GM12878 (cell line): ENCODE measurements at regions of chr1 and their contacts with region 1.

Region 1: GRCh38 chr1:63691701-63692425 is 82.0 kb upstream of the ROR1 start:
- DNase-seq: no peak
- ATAC-seq: peak; percentile 90
- H3K4me3 ChIP-seq: no peak overlapping the region
- H3K27ac ChIP-seq: no peak overlapping the region
- H3K4me1 ChIP-seq: no peaks in the 10 kb centered on the region
- H3K27me3 ChIP-seq: no peaks in the 10 kb centered on the region; a peak in 1 of 4 replicates
- CTCF ChIP-seq: peak; percentile 76 to 84 (median 83)
- EP300 ChIP-seq: no peak
- POLR2A ChIP-seq: no peak
- RAD21 ChIP-seq: peak; percentile 90

Region 2: DNA sequence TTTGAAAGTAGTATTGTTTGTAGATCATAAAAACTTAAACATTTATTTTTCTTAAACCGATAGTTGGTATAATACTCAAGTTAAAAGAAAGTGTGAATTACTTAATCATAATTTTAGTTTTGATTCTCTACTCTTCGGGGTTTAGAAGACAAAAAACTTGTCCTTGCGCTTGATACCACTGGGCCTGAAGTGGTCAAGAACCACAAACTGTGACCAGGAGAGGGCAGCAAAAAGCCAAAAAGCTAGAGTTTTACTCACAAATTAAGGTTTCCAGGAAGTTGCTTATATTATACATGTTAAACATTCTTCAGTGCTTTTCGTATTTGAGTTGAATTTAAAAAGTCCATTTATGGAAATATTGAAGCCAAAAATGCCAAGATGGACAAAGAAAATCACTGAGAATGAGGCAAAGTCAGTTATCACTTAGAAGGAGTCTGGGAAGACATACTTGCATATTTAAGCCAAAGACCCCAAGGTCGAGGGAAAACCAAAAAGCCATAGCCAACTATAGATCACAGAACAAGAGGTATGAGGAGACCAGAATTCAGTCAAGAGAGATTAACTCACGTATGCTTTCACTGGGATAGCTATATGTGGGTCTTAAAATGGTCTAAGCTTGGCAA is 134.4 kb before region 1 on chr1:
- CTCF ChIA-PET with region 1: interaction called, 14 read pairs
- POLR2A ChIA-PET with region 1: interaction called, 5 read pairs
- RAD21 ChIA-PET with region 1: interaction called, 15 read pairs
- SMC1A ChIA-PET with region 1: interaction called, 5 read pairs
- in situ Hi-C with region 1: no loop called
- intact Hi-C with region 1: no loop called
- DNase-seq: no peak
- ATAC-seq: peak; percentile 88
- H3K4me3 ChIP-seq: no peak overlapping the region
- H3K27ac ChIP-seq: no peak overlapping the region
- H3K4me1 ChIP-seq: no peaks in the 10 kb centered on the region
- H3K27me3 ChIP-seq: no peaks in the 10 kb centered on the region
- CTCF ChIP-seq: peak; percentile 45 to 64 (median 55)
- EP300 ChIP-seq: no peak
- POLR2A ChIP-seq: no peak
- RAD21 ChIP-seq: peak; percentile 63

Region 3: GRCh38 chr1:63615768-63616420 is 76.0 kb before region 1 on chr1:
- CTCF ChIA-PET with region 1: interaction called, 4 read pairs
- POLR2A ChIA-PET with region 1: no interaction called
- RAD21 ChIA-PET with region 1: interaction called, 10 read pairs
- SMC1A ChIA-PET with region 1: interaction called, 9 read pairs
- in situ Hi-C with region 1: no loop called
- intact Hi-C with region 1: no loop called
- DNase-seq: peak; percentile 19
- ATAC-seq: peak; percentile 90
- H3K4me3 ChIP-seq: no peak overlapping the region
- H3K27ac ChIP-seq: no peak overlapping the region
- H3K4me1 ChIP-seq: no peaks in the 10 kb centered on the region
- H3K27me3 ChIP-seq: no peaks in the 10 kb centered on the region
- CTCF ChIP-seq: peak; percentile 57 to 79 (median 71); a peak in 5 of 6 replicates
- EP300 ChIP-seq: no peak
- POLR2A ChIP-seq: no peak
- RAD21 ChIP-seq: peak; percentile 76

Region 4: DNA sequence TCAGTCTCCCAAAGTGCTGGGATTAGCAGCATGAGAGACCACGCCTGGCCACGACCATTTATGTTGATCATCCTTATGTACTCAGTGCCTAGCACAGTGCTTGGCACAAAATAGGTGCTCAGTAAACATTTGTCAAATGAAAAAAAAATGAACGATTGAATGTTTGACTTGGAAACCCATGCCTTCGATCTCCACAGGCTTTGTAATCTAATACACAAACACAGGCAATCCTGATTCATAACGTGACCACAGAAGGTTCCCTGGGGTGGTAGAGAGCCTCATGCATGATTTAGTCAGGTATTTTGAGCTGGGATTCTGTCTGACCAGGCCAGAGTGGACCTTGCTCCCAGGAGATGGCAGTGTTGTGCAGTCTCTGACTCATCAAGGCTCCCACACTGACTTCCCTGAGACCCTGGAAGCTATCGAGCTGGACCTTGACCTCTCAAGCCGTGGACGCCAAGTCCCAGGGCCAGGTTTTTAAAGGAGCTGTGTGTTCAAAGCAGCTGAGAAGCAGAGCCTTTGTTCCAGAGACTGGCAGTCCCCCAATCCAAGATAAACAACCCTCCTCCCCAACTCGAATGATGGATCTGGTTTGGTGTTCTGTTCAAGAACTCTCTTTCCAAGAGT is 17.5 kb before region 1 on chr1:
- CTCF ChIA-PET with region 1: interaction called, 24 read pairs
- POLR2A ChIA-PET with region 1: no interaction called
- RAD21 ChIA-PET with region 1: interaction called, 9 read pairs
- SMC1A ChIA-PET with region 1: interaction called, 8 read pairs
- in situ Hi-C with region 1: no loop called
- intact Hi-C with region 1: no loop called
- DNase-seq: no peak
- ATAC-seq: peak; percentile 94
- H3K4me3 ChIP-seq: no peak overlapping the region
- H3K27ac ChIP-seq: no peak overlapping the region
- H3K4me1 ChIP-seq: no peaks in the 10 kb centered on the region
- H3K27me3 ChIP-seq: no peaks in the 10 kb centered on the region
- CTCF ChIP-seq: peak; percentile 42 to 60 (median 42); a peak in 5 of 6 replicates
- EP300 ChIP-seq: no peak
- POLR2A ChIP-seq: no peak
- RAD21 ChIP-seq: peak; percentile 50

Region 5: GRCh38 chr1:63847308-63847910 is 155.5 kb after region 1 on chr1:
- CTCF ChIA-PET with region 1: interaction called, 12 read pairs
- POLR2A ChIA-PET with region 1: no interaction called
- RAD21 ChIA-PET with region 1: no interaction called
- SMC1A ChIA-PET with region 1: no interaction called
- in situ Hi-C with region 1: no loop called
- intact Hi-C with region 1: no loop called
- DNase-seq: no peak
- ATAC-seq: no peak
- H3K4me3 ChIP-seq: no peak overlapping the region
- H3K27ac ChIP-seq: no peak overlapping the region
- H3K4me1 ChIP-seq: no peaks in the 10 kb centered on the region
- H3K27me3 ChIP-seq: no peaks in the 10 kb centered on the region; a peak in 1 of 4 replicates
- CTCF ChIP-seq: no peak
- EP300 ChIP-seq: no peak
- POLR2A ChIP-seq: no peak
- RAD21 ChIP-seq: no peak

Region 6: GRCh38 chr1:63902844-63903589 is 211.2 kb after region 1 on chr1:
- CTCF ChIA-PET with region 1: interaction called, 14 read pairs
- POLR2A ChIA-PET with region 1: no interaction called
- RAD21 ChIA-PET with region 1: interaction called, 9 read pairs
- SMC1A ChIA-PET with region 1: interaction called, 4 read pairs
- in situ Hi-C with region 1: no loop called
- intact Hi-C with region 1: no loop called
- DNase-seq: no peak
- ATAC-seq: no peak
- H3K4me3 ChIP-seq: no peak overlapping the region
- H3K27ac ChIP-seq: no peak overlapping the region
- H3K4me1 ChIP-seq: no peaks in the 10 kb centered on the region
- H3K27me3 ChIP-seq: no peaks in the 10 kb centered on the region
- CTCF ChIP-seq: no peak
- EP300 ChIP-seq: no peak
- POLR2A ChIP-seq: no peak
- RAD21 ChIP-seq: no peak

Region 7: GRCh38 chr1:63917571-63918417 is 225.9 kb after region 1 on chr1:
- CTCF ChIA-PET with region 1: interaction called, 45 read pairs
- POLR2A ChIA-PET with region 1: no interaction called
- RAD21 ChIA-PET with region 1: interaction called, 35 read pairs
- SMC1A ChIA-PET with region 1: interaction called, 24 read pairs
- in situ Hi-C with region 1: no loop called
- intact Hi-C with region 1: loop called (anchors 1 kb)
- DNase-seq: no peak
- ATAC-seq: peak; percentile 76
- H3K4me3 ChIP-seq: no peak overlapping the region
- H3K27ac ChIP-seq: no peak overlapping the region
- H3K4me1 ChIP-seq: no peaks in the 10 kb centered on the region
- H3K27me3 ChIP-seq: no peaks in the 10 kb centered on the region; a peak in 1 of 4 replicates
- CTCF ChIP-seq: peak; percentile 21 to 55 (median 44); a peak in 4 of 6 replicates
- EP300 ChIP-seq: no peak
- POLR2A ChIP-seq: no peak
- RAD21 ChIP-seq: peak; percentile 41; the same call in 1 of the 2 replicates